ENCODE measurements at regions of chr16 and their contacts with region 1.

Region 1: GRCh38 chr16:2223375-2224182 is at the start of gene E4F1:
- DNase-seq: peak; percentile 98
- ATAC-seq: peak; percentile 98
- H3K4me3 Mint-ChIP-seq: peak within 1 kb of the TSS; percentile 81
- H3K27ac Mint-ChIP-seq: peak within 1 kb of the TSS; percentile 59
- H3K4me1 Mint-ChIP-seq: peaks cover 20% of the 10 kb centered on the region
- H3K27me3 Mint-ChIP-seq: no peaks in the 10 kb centered on the region
- CTCF ChIP-seq: no peak
- total RNA-seq, gene E4F1: 29.9 and 31.3 TPM in 2 replicates

Region 2: DNA sequence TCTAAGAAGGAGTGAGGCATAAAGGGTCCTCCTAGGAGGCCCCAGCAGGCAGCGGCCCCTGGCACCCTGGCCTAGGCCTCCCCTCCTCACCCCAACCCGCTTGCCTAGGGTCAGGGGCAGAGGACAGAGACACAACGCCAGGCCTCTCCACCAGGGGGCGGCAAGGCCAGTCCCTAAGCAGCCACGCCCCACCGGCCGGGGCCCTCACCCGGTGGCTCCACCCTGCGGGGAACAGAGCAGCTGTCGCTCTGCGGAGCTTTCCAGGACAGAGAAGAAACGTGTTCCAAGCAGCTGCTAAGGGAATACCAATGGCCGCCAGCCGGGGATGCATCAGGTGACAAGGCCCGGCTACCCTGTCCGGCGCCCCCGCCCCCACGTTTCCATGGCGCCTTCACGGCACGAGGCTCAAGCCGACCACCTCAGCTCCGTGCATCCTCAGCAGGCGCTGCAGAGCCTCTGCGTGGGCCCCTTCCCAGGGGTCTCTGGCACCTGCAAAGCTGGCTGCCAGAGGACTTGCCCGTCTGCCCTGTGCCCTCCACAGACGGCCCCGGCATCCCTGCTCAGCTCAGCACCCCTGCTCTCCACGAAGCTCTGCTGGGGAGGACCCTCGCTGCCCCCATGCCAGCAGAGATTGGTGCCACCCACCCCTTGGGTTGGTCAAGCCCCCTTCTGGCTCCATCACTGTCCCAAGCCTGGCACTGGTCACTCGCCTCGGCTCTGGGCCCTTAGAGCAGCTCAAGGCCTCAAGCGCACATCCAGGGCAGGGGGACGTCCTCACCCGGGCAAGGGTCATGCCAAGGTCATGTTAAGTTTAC is 219.5 kb before region 1 on chr16:
- CTCF ChIA-PET with region 1: no interaction called
- POLR2A ChIA-PET with region 1: interaction called, 10 read pairs
- intact Hi-C with region 1: no loop called
- DNase-seq: peak; percentile 80
- ATAC-seq: peak; percentile 99
- H3K4me3 Mint-ChIP-seq: no peak overlapping the region
- H3K27ac Mint-ChIP-seq: no peak overlapping the region
- H3K4me1 Mint-ChIP-seq: peaks cover 38% of the 10 kb centered on the region
- H3K27me3 Mint-ChIP-seq: no peaks in the 10 kb centered on the region
- CTCF ChIP-seq: peak; percentile 47

Region 3: GRCh38 chr16:2023098-2023925 is 200.3 kb before region 1 on chr16:
- CTCF ChIA-PET with region 1: no interaction called
- POLR2A ChIA-PET with region 1: no interaction called
- intact Hi-C with region 1: loop called (anchors 1 kb)
- DNase-seq: peak; percentile 97
- ATAC-seq: peak; percentile 94
- H3K4me3 Mint-ChIP-seq: peak overlapping the region; percentile 79
- H3K27ac Mint-ChIP-seq: peak overlapping the region; percentile 73
- H3K4me1 Mint-ChIP-seq: peaks cover 24% of the 10 kb centered on the region
- H3K27me3 Mint-ChIP-seq: peaks cover 27% of the 10 kb centered on the region
- CTCF ChIP-seq: peak; percentile 82

Region 4: DNA sequence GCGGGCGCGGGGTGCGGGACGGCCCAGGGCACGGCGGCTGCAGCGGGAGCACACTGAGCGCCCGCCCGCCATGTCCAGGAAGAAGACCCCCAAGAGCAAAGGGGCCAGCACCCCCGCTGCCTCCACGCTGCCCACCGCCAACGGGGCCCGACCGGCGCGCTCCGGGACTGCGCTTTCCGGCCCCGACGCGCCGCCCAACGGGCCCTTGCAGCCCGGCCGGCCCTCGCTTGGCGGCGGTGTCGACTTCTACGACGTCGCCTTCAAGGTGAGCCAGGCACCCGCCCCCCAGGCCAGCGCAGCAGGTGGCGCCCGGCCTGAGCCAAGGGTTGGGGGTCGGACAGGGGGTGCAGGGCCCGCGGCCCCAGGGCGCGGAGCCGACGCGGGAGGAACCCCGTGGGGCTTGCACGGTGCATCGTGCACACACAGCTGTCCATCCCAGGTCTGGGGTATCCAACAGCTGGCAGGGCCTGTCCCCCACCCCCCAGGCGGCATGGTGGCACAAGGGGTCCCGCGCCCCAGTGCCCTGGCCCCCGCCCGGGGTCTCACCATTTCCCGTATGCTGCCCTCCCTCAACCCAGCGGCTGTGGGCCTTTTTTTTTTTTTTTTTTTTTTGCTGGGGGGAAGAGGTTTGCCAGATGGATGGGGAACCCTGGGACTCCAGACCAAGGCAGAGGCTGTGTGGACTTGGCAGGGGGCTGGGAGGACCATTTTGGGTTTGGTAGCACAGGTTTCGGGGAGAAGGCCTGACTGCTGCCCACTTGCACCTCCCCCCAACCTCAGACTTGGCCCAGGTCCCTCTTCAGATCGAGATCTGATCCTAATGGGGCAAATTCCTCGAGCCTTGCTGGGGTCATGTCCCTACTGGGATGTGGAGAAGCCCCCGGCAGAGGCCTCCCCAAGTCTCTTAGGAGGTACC is 74.6 kb before region 1 on chr16:
- CTCF ChIA-PET with region 1: no interaction called
- POLR2A ChIA-PET with region 1: no interaction called
- intact Hi-C with region 1: no loop called
- DNase-seq: no peak
- ATAC-seq: peak; percentile 13
- H3K4me3 Mint-ChIP-seq: peak overlapping the region; percentile 41
- H3K27ac Mint-ChIP-seq: no peak overlapping the region
- H3K4me1 Mint-ChIP-seq: peaks cover 38% of the 10 kb centered on the region
- H3K27me3 Mint-ChIP-seq: no peaks in the 10 kb centered on the region
- CTCF ChIP-seq: no peak

Region 5: GRCh38 chr16:2205104-2205966 is 18.2 kb before region 1 on chr16 and contains the start of gene MLST8:
- CTCF ChIA-PET with region 1: no interaction called
- POLR2A ChIA-PET with region 1: interaction called, 3 read pairs
- intact Hi-C with region 1: loop called (anchors 1 kb)
- DNase-seq: peak; percentile 99
- ATAC-seq: peak; percentile 90
- H3K4me3 Mint-ChIP-seq: peak within 1 kb of the TSS; percentile 84
- H3K27ac Mint-ChIP-seq: peak within 1 kb of the TSS; percentile 86
- H3K4me1 Mint-ChIP-seq: peaks cover 19% of the 10 kb centered on the region
- H3K27me3 Mint-ChIP-seq: no peaks in the 10 kb centered on the region
- CTCF ChIP-seq: no peak
- total RNA-seq, gene MLST8: 35.7 and 38.7 TPM in 2 replicates

Region 6: DNA sequence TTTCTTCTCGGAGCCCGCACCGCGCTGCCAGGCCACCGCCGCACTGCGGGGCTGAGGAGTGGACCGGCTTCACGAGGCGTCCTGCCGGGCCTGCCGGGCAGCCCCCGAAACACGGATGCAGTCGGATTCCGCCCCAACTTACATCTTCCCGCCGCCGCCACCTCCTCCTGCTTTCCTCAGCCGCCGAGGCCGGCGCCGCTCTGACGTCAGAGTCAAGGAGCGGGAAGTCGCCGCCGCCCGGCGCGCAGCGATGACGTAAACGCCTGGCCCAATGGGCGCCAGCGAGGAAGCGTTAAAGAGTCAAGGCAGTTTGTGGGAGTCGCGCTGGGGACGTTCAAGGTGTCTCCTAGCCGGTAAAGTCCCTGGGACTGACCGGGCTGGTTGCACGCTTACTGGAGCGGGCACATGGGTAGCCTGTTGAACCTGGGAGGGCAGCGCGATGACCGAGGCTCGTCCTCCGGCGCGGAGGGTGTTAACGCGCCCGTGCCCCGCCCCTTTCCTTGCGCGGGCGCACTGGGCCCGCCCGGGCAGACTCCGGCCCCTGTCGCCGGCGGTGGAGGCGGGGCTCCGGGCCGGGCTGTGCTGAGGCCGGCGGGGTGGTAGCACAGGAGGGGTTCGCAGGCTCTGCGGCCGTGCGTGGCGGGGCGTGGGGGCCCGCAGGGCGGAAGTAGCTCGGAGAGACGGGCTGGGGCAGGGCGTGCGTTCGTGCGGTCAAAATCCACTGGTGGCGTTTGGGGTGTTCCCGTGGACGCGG is 44.5 kb after region 1 on chr16 and contains the start of gene RNPS1:
- CTCF ChIA-PET with region 1: no interaction called
- POLR2A ChIA-PET with region 1: no interaction called
- intact Hi-C with region 1: loop called (anchors 1 kb)
- DNase-seq: peak; percentile 98
- ATAC-seq: peak; percentile 91
- H3K4me3 Mint-ChIP-seq: peak within 1 kb of the TSS; percentile 93
- H3K27ac Mint-ChIP-seq: peak within 1 kb of the TSS; percentile 98
- H3K4me1 Mint-ChIP-seq: peaks cover 43% of the 10 kb centered on the region
- H3K27me3 Mint-ChIP-seq: no peaks in the 10 kb centered on the region
- CTCF ChIP-seq: no peak
- total RNA-seq, gene RNPS1: 228 and 232 TPM in 2 replicates

Region 7: GRCh38 chr16:2429034-2429770 is 205.6 kb after region 1 on chr16 and contains the start of gene CCNF:
- CTCF ChIA-PET with region 1: no interaction called
- POLR2A ChIA-PET with region 1: no interaction called
- intact Hi-C with region 1: loop called (anchors 10 kb)
- DNase-seq: peak; percentile 91
- ATAC-seq: peak; percentile 97
- H3K4me3 Mint-ChIP-seq: peak within 1 kb of the TSS; percentile 85
- H3K27ac Mint-ChIP-seq: peak within 1 kb of the TSS; percentile 56
- H3K4me1 Mint-ChIP-seq: peaks cover 16% of the 10 kb centered on the region
- H3K27me3 Mint-ChIP-seq: no peaks in the 10 kb centered on the region
- CTCF ChIP-seq: no peak
- total RNA-seq, gene CCNF: 5.3 and 5.5 TPM in 2 replicates

Region 8: DNA sequence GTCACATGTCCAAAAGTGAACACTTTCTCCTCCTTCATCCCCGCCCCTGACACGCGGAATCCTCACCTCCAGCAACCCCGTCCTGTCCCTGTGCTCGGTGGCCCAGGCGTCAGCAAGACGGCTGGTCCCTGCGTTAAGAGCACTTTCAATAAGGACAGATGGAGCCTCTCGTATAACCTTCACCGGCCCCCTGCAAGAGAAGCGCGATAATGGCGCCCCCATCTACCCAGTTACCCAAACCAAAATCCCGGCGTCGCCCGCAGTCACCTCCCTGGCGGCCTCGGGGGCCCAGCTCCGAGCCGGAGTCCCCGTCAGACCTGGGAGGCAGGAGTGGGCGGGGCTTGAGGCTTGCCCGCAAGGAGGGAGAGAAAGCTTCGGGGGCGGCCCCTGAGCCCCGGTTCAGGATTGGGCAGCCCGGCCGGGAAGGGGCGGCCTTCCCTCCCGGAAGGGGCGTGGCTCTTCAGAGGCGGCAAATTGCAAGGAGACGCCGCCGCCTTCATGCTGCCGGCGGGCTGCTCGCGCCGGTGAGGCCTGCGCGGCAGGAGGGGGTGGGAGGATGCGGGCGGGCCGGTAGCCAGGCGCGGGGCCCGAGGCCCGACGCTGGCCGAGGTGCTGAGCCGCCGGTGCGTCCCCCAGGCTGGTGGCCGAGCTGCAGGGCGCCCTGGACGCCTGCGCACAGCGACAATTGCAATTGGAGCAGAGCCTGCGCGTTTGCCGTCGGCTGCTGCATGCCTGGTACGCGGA is 236.2 kb after region 1 on chr16 and contains the start of gene TEDC2:
- CTCF ChIA-PET with region 1: no interaction called
- POLR2A ChIA-PET with region 1: no interaction called
- intact Hi-C with region 1: loop called (anchors 1 kb)
- DNase-seq: peak; percentile 91
- ATAC-seq: peak; percentile 100
- H3K4me3 Mint-ChIP-seq: peak within 1 kb of the TSS; percentile 86
- H3K27ac Mint-ChIP-seq: peak within 1 kb of the TSS; percentile 73
- H3K4me1 Mint-ChIP-seq: peaks cover 9% of the 10 kb centered on the region
- H3K27me3 Mint-ChIP-seq: no peaks in the 10 kb centered on the region
- CTCF ChIP-seq: no peak
- total RNA-seq, gene TEDC2: 3.4 and 4.4 TPM in 2 replicates